ENCODE measurements at regions of chr6 and their contacts with region 1.

Region 1: GRCh38 chr6:117449549-117450439 is 24.1 kb upstream of the ROS1 start:
- DNase-seq: peak; percentile 50
- H3K4me3 ChIP-seq: no peak overlapping the region
- H3K27ac ChIP-seq: peak overlapping the region; percentile 98
- H3K4me1 ChIP-seq: peaks cover 39% of the 10 kb centered on the region
- H3K27me3 ChIP-seq: no peaks in the 10 kb centered on the region
- CTCF ChIP-seq: peak; percentile 67 to 68

Region 2: DNA sequence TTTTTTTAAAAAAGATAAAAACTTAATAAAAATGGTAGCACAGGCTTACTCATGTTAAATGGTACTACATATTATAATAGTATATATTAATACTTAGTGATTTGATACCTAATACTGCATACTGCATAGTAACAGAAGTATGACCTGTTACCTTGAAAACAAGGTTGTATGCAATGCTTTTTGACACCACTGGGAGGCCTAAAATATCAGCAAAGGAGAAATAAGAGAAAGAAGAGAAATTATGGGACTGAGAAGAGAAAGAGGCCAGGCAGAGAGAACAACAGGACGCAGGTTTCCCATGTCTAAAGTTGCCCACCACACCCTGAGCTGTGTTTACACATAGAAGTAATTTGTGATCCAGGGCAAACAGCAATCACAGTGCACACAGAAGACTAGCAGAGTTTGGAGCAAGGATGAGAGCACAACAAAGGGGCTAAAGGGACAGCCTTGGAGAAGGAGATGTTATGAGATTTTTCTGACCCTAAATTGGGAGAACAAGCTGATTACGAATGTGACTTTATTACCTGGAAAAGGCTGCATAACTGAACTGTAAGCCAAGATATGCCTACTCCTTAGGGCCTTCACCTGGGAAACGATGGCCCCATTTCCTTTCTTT is 97.2 kb before region 1 on chr6:
- CTCF ChIA-PET with region 1: no interaction called
- dilution Hi-C with region 1: no loop called
- in situ Hi-C with region 1: no loop called
- intact Hi-C with region 1: loop called (anchors 1 kb)
- DNase-seq: peak; percentile 14
- H3K4me3 ChIP-seq: no peak overlapping the region
- H3K27ac ChIP-seq: no peak overlapping the region
- H3K4me1 ChIP-seq: peaks cover 4% of the 10 kb centered on the region
- H3K27me3 ChIP-seq: no peaks in the 10 kb centered on the region
- CTCF ChIP-seq: peak; percentile 74 to 79

Region 3: DNA sequence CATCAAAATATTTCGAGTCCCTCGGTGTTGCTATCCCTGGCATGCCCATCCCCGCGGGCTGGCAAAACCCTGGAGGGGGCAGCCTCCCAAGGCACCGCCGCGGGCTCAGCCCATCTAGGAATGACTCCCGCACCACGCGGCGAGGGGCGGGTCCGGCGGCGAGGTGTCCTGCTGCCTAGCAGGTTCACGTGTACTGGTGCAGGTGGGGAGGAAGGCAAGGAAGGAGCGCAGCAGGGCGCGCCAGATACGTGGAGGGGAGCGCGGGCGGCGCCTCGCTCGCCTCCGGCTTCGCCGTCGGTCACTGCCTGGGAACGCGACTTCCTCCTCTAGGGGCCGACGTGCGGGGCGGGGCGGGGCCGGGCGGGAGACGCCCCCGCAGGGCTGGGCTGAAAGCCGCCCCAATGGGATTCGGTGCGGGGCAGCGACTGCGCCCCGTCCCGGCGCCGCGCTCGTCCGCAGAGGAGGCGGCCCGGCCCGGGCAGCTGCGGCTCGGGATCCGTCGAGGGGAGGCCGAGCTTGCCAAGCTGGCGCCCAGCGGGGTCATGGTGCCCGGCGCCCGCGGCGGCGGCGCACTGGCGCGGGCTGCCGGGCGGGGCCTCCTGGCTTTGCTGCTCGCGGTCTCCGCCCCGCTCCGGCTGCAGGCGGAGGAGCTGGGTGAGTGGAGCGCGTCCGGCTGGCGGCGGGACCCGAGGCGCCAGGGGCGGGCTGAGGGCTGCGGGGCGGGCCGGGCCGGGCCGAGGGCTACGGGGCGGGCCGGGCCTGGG is 32.6 kb after region 1 on chr6 and contains the start of gene DCBLD1:
- CTCF ChIA-PET with region 1: interaction called, 3 read pairs
- dilution Hi-C with region 1: loop called (anchors 5 kb)
- in situ Hi-C with region 1: no loop called
- intact Hi-C with region 1: loop called (anchors 2 kb)
- DNase-seq: peak; percentile 86
- H3K4me3 ChIP-seq: peak within 1 kb of the TSS; percentile 81 to 91 (median 83)
- H3K27ac ChIP-seq: peak within 1 kb of the TSS; percentile 79
- H3K4me1 ChIP-seq: peaks cover 27% of the 10 kb centered on the region
- H3K27me3 ChIP-seq: no peaks in the 10 kb centered on the region
- CTCF ChIP-seq: no peak
- total RNA-seq, gene DCBLD1: 34.6 to 84.0 TPM

Region 4: DNA sequence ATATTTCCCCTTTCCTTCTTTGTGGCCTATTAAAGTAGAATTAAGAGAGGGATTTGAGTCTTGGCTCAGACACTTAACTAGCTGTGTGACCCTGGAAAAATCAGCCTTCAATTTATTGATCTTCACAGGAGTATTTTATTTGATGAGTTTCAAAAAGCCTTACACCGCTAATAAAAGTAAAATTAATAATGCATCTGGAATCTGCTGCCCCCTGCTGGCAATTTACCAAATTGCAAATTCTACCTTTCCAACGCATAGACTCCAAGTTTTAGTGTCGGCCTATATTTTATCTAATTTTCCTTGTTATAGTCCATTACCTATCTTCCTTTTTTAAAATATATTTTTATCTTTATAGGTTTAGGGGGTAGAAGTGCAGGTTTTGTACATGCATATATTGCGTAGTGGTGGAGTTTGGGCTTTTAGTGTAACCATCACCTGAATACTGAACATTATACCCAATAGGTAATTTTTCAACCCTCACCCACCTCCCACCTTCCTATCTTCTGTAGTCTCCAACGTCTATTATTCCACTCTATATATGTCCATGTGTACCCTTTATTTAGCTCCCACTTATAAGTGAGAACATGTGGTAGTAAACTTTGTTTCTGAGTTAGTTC is 106.2 kb after region 1 on chr6:
- CTCF ChIA-PET with region 1: no interaction called
- dilution Hi-C with region 1: no loop called
- in situ Hi-C with region 1: loop called (anchors 5 to 10 kb)
- intact Hi-C with region 1: loop called (anchors 1 kb)
- DNase-seq: peak; percentile 32
- H3K4me3 ChIP-seq: no peak overlapping the region
- H3K27ac ChIP-seq: no peak overlapping the region
- H3K4me1 ChIP-seq: peaks cover 18% of the 10 kb centered on the region
- H3K27me3 ChIP-seq: no peaks in the 10 kb centered on the region
- CTCF ChIP-seq: peak; percentile 73 to 84

Region 5: GRCh38 chr6:117829594-117830319 is 380.0 kb after region 1 on chr6:
- CTCF ChIA-PET with region 1: no interaction called
- dilution Hi-C with region 1: no loop called
- in situ Hi-C with region 1: no loop called
- intact Hi-C with region 1: loop called (anchors 2 kb)
- DNase-seq: peak; percentile 33
- H3K4me3 ChIP-seq: peak overlapping the region; percentile 42 to 55 (median 48)
- H3K27ac ChIP-seq: no peak overlapping the region
- H3K4me1 ChIP-seq: no peaks in the 10 kb centered on the region
- H3K27me3 ChIP-seq: no peaks in the 10 kb centered on the region
- CTCF ChIP-seq: peak; percentile 27 to 69